Activated CD4-positive, alpha-beta T cell treated with anti-CD3 and anti-CD28 coated beads, Interleukin-2, amount 10 ng/mL, durations not matched to agents 24 days and 14 days (primary cell): ENCODE measurements at regions of chr7 and their contacts with region 1.

Region 1: DNA sequence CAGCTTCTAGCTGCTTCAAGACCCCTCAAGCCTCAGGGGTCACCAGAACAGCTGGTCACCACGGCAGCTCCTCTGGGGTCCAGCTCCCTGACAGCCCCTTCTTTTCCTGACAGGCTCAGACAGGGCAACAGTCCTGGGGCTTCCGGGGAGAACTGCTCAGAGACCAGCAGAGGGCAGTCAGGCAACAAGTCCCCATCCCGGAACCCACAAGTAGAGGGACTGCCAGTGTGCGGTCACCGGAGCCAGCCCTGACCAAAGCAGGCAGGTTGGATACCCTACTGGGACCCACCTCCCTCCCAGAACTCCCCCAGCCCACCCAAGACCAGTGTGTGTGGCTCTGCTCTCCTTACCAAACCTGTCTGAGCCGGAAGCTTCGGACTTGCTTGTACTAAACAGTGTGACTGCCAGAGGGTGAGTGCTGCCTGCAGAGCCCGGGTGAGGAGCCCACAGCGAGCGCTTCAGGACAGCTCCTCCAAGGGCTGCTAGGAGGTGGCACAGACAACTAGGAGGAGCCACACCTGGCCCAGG is 40.3 kb downstream of the YKT6 start:
- DNase-seq: peak; percentile 90
- H3K4me3 Mint-ChIP-seq: peak overlapping the region; percentile 43
- H3K27ac Mint-ChIP-seq: peak overlapping the region; percentile 48
- H3K4me1 Mint-ChIP-seq: peaks cover 4% of the 10 kb centered on the region
- H3K27me3 Mint-ChIP-seq: no peaks in the 10 kb centered on the region

Region 2: DNA sequence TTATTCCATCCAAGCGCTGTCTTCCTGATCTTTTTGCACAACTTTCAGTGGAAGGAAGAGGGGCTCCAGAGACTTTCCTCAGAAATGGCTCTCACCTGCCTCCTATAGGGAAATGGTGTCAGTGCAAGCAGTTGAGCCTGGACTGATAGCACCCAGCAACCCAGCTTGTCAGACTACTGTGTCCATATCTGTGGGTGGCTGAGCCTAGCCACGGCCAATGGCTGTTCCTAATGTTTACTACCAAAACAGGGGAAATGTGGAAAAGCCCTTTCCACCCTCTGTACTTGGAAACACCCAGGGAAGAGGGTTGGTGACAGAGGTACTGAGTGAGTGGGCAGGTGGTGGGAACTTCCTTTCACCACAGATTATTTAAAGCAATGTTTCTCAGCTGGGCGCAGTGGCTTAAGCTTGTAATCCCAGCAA is 44.6 kb before region 1 on chr7:
- intact Hi-C with region 1: no loop called
- DNase-seq: peak; percentile 82
- H3K4me3 Mint-ChIP-seq: no peak overlapping the region
- H3K27ac Mint-ChIP-seq: no peak overlapping the region
- H3K4me1 Mint-ChIP-seq: peaks cover 14% of the 10 kb centered on the region
- H3K27me3 Mint-ChIP-seq: peaks cover 4% of the 10 kb centered on the region

Region 3: DNA sequence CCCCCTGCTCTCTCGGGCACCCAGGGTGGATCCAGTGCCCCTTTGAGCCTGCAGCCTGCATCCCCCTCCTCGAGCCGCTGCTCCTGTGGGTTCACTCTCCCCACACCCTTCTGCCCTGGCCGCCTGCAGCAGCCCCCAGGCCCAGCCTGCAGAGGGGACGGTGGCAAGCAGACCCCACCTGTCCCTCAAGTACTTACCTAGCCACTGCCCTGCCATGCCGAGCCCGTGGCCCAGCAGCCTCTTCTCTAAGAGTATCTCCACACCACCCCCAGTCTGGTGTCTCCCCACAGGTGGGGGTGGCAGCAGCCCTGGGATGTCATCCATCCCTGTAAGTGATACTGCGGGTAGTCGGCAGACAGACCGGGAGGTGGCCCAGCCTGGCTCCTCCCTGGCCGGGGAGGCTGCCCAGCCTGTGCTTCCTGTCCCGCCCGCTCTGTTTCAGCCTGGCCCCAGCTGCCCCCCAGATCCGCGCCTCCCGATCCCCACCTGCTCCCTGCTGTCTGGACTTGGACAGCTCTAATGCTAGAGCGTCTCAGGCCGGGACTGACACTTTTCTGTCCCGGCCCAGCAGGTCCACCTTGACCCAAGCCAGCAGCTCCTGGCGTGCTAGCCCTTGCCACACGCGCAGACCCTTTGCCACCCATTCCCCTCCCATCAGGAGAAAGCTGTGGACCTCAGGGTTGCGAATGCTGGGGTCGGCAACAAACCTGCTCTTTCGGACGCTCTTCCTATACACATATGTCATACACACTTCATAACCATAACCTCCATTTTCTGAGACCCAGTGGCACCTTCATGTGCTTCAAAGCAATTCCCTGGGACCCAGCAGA is 15.3 kb before region 1 on chr7:
- intact Hi-C with region 1: no loop called
- DNase-seq: no peak
- H3K4me3 Mint-ChIP-seq: no peak overlapping the region
- H3K27ac Mint-ChIP-seq: no peak overlapping the region
- H3K4me1 Mint-ChIP-seq: no peaks in the 10 kb centered on the region
- H3K27me3 Mint-ChIP-seq: no peaks in the 10 kb centered on the region

Region 4: DNA sequence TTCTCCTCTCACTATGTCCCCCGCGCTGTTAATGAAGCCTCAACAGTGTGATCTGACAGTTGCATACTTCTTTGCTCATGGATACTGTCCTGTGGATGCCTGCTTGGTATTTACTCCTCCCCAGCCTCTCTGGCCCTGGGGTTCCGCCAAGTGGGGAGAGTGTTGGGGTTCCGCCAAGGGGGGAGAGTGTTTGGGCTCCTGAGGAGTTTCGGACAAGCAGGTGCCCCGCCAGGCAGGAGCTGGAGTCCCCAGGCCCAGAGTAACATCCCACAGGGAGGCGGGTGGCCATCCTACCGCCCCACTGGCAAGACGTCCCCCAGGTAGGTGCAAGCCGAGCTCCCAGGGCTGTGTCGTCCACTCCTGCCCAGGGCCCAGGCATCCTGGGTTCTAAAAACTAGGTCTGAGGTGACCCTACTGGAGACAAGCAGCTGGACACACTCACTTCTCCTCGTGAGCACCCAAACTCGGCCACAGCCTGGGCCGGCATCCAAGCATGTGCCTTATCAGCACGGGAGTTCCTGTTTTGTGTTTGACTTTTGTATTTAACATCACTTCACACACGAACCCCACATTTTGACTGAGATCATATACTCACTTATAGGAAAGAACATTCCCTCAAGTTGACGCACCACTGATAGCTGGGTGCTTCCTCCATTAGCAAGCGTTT is 50.2 kb after region 1 on chr7:
- intact Hi-C with region 1: loop called (anchors 5 kb)
- DNase-seq: no peak
- H3K4me3 Mint-ChIP-seq: no peak overlapping the region
- H3K27ac Mint-ChIP-seq: no peak overlapping the region
- H3K4me1 Mint-ChIP-seq: no peaks in the 10 kb centered on the region
- H3K27me3 Mint-ChIP-seq: peaks cover 34% of the 10 kb centered on the region

Region 5: GRCh38 chr7:44307301-44307900 is 66.4 kb after region 1 on chr7:
- intact Hi-C with region 1: loop called (anchors 1 kb)
- DNase-seq: no peak
- H3K4me3 Mint-ChIP-seq: no peak overlapping the region
- H3K27ac Mint-ChIP-seq: no peak overlapping the region
- H3K4me1 Mint-ChIP-seq: peaks cover 5% of the 10 kb centered on the region
- H3K27me3 Mint-ChIP-seq: peaks cover 27% of the 10 kb centered on the region

Region 6: DNA sequence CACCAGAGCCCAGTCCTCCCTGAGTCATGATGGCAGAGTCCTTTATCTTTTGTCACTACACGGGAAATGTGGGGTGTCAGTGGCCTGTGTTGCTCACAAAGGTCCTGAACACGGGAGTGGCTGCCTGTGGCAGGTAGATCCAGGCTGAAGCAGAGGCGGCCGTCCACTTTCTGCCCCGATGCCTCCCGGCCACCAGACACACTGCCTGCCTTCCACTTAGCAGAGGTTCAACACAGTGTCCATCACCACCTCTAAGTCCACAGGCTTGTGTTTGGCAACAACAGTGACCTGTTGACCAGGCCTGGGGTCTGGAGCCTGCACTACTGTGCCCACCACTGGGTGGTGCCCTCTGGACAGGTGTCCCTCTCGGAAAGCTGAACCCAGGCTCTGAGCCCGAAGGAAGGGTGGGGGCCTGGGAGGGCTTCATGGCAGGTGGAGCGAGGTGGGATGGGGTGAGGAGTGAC is 134.2 kb after region 1 on chr7:
- intact Hi-C with region 1: loop called (anchors 10 kb)
- DNase-seq: peak; percentile 58
- H3K4me3 Mint-ChIP-seq: no peak overlapping the region
- H3K27ac Mint-ChIP-seq: no peak overlapping the region
- H3K4me1 Mint-ChIP-seq: peaks cover 3% of the 10 kb centered on the region
- H3K27me3 Mint-ChIP-seq: peaks cover 20% of the 10 kb centered on the region

Region 7: DNA sequence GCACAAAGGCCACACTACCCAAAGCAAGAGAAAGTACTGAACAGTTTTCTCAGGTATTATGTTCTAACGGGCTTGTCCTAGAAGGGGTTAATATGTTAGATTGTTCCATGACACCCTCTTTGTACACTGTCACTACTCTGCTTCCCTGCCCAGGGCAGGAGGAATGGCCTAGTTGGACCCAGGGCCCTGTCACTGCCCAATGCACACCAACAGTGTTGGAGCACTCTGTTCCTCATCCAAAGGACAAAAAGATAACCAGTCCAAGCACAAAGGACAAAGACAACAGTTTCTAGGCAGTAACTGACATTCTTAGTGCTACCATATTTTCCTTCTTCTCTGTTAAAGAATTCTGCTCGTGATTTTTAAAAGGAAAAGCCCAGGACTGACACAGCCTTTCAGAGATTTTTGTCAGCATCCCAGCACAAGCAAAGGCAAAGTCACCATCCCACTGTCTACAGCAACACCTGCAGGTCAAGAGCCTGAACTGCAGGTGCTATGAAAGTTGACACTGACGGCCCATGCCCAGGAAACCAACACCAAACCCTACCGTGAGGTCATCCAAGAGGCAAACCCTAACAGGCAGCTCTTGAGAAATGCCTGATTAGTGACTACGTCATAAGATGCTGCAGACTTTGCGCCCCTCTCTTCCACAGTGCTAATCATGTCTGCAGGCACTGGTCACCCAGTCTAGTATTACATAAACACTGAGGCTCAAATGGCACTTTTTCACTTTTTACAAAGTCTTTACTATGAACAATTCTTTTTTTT is 236.2 kb after region 1 on chr7:
- intact Hi-C with region 1: loop called (anchors 1 kb)
- DNase-seq: peak; percentile 89
- H3K4me3 Mint-ChIP-seq: no peak overlapping the region
- H3K27ac Mint-ChIP-seq: no peak overlapping the region
- H3K4me1 Mint-ChIP-seq: peaks cover 15% of the 10 kb centered on the region
- H3K27me3 Mint-ChIP-seq: no peaks in the 10 kb centered on the region

Region 8: GRCh38 chr7:44565097-44565794 is 324.2 kb after region 1 on chr7:
- intact Hi-C with region 1: loop called (anchors 2 kb)
- DNase-seq: peak; percentile 90
- H3K4me3 Mint-ChIP-seq: no peak overlapping the region
- H3K27ac Mint-ChIP-seq: peak overlapping the region; percentile 38
- H3K4me1 Mint-ChIP-seq: no peaks in the 10 kb centered on the region
- H3K27me3 Mint-ChIP-seq: no peaks in the 10 kb centered on the region